Activated CD4-positive, alpha-beta T cell treated with anti-CD3 and anti-CD28 coated beads for 36 hours (primary cell): ENCODE measurements at regions of chr2 and their contacts with region 1.

Region 1: DNA sequence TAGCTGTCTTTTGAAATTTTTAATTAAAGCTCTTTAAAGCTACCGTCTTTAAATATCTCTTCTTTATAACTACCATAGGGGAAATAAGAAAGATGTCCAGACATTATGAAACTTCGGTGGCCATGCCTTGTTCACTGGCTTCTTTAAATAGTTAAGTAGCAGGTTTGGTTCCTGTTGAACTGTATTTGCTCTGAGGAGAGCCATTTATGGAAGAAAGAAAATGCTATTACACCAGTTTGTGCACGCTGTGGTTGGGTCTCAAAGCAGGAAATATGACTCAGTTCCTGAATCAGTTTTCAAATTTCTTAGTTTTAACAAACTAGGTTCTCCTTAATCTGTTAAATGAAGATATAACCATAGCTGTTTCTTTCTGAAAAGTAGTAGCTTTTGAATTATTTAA is 12.2 kb downstream of the ARPC2 start:
- DNase-seq: peak; percentile 70
- ATAC-seq: peak; percentile 83
- H3K4me3 Mint-ChIP-seq: peak overlapping the region; percentile 45
- H3K27ac Mint-ChIP-seq: peak overlapping the region; percentile 95
- H3K4me1 Mint-ChIP-seq: peaks cover 77% of the 10 kb centered on the region
- H3K27me3 Mint-ChIP-seq: no peaks in the 10 kb centered on the region

Region 2: DNA sequence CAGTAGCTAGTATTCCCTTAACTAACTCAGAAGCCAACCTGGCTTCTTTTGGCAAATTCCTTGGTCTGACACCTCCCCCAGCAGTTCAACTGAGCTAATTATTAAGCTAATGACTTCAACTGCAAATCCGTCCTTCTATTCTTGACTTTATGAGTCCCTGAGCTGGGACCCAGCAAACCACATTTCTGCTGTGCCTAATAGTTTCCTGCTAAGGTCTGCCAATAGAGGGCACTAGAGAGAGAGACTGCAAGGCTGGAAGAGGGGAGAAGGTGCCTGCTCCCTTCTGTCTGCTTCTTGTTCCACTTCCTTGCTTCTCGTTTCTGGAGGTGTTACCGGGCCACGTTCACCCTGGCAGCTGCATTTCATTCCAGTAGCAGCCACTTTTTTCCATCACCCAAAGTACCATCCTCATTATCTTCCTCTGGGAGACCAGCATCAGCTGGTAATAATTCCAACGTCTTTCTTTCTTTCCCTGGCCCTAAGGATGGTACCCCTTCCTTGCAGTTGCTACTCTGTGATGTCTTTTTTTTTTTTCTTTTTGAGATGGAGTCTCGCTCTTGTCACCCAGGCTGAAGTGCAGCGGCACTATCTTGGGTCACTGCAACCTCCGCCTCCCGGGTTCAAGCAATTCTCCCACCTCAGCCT is 578.4 kb before region 1 on chr2:
- CTCF ChIA-PET with region 1: no interaction called
- POLR2A ChIA-PET with region 1: no interaction called
- intact Hi-C with region 1: no loop called
- DNase-seq: peak; percentile 43
- ATAC-seq: peak; percentile 87
- H3K4me3 Mint-ChIP-seq: no peak overlapping the region
- H3K27ac Mint-ChIP-seq: no peak overlapping the region
- H3K4me1 Mint-ChIP-seq: peaks cover 3% of the 10 kb centered on the region
- H3K27me3 Mint-ChIP-seq: peaks cover 2% of the 10 kb centered on the region

Region 3: GRCh38 chr2:218186355-218186766 is 42.9 kb before region 1 on chr2:
- CTCF ChIA-PET with region 1: interaction called, 6 read pairs
- POLR2A ChIA-PET with region 1: no interaction called
- intact Hi-C with region 1: loop called (anchors 1 to 2 kb)
- DNase-seq: peak; percentile 83
- ATAC-seq: peak; percentile 95
- H3K4me3 Mint-ChIP-seq: no peak overlapping the region
- H3K27ac Mint-ChIP-seq: no peak overlapping the region
- H3K4me1 Mint-ChIP-seq: peaks cover 8% of the 10 kb centered on the region
- H3K27me3 Mint-ChIP-seq: no peaks in the 10 kb centered on the region

Region 4: DNA sequence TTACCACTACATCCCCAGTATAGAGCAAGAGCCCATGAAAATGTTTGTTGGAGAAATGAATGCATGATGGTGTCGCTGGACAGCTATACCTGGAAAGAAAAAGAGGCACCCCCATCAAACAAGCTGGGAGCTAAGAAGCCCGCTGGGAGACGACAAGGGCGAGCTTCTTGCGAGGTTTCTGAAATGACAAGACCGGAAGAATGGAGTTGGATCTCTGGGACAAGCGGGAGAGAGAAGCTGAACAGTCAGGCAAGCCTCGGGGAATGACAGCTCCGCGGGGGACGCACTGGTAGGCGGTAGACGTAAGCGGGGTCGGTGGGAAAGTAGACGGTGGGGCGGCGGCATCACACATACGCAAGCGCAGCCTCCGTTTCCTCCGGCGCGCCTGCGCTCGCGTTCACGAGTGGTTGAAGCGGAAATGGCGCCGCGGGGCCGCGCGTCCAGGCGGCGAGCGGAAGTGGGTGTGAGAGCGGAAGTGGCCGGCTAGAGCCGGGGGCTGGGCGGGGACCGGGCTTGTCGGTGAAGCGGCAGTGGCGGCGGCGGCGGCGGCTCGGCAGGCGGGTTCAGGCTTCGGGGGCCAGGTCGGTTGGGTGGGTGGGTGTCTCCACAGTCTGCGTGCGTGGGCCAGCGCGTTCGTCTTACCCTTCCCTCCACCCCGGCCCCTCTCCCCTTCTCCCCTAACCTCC is 12.4 kb before region 1 on chr2 and contains the start of gene ARPC2:
- CTCF ChIA-PET with region 1: interaction called, 47 read pairs
- POLR2A ChIA-PET with region 1: interaction called, 10 read pairs
- intact Hi-C with region 1: loop called (anchors 1 kb)
- DNase-seq: peak; percentile 96
- ATAC-seq: peak; percentile 64
- H3K4me3 Mint-ChIP-seq: peak within 1 kb of the TSS; percentile 81
- H3K27ac Mint-ChIP-seq: peak within 1 kb of the TSS; percentile 96
- H3K4me1 Mint-ChIP-seq: peaks cover 34% of the 10 kb centered on the region
- H3K27me3 Mint-ChIP-seq: no peaks in the 10 kb centered on the region
- total RNA-seq, gene ARPC2: 563 to 632 TPM

Region 5: GRCh38 chr2:218245214-218245613 is 16.0 kb after region 1 on chr2:
- CTCF ChIA-PET with region 1: interaction called, 29 read pairs
- POLR2A ChIA-PET with region 1: interaction called, 3 read pairs
- intact Hi-C with region 1: loop called in 1 of 2 experiments (anchors 2 kb)
- DNase-seq: no peak
- ATAC-seq: peak; percentile 23
- H3K4me3 Mint-ChIP-seq: no peak overlapping the region
- H3K27ac Mint-ChIP-seq: peak overlapping the region; percentile 72
- H3K4me1 Mint-ChIP-seq: peaks cover 4% of the 10 kb centered on the region
- H3K27me3 Mint-ChIP-seq: no peaks in the 10 kb centered on the region

Region 6: DNA sequence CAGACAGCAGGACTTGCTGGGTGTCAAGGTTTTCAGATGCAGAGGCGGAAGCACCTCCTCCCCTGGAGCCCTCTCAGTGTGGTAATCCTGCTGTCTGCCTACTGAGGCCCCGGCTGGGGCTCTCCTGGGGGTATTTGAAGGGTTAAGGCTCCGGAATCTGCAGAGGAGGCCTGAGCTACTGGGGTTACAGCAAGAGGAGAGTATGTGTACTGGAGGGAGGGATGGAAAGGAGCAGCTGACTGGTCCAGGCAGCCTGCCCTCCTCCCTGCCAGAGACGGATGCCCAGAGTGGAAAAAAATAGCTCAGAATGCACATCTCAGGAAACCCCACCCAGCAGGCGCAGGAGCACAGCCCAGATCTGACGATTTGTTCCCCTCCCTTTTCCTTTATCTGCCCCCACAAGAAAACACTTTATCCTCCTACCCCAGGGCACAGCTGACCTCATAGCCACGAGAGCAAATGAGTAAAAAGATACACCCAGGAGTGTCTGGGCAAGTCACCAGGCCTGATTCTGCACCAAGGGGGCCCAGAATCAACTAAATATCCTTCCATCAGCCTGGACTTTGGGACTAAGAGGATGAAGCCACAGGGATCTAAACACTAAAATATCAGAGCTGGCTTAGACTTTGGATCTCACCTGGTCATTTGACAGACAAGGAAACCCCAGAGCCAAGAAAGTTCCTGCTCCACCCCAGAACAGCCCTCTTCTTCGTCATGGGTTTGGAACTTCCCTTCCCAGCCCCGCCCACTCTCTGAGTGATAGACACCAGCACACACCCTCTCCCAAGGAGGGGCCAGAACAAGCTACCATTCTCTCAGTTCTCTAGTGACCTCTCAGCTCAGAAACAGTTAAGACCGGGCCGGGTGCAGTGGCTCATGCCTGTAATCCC is 57.6 kb after region 1 on chr2:
- CTCF ChIA-PET with region 1: interaction called, 4 read pairs
- POLR2A ChIA-PET with region 1: interaction called, 7 read pairs
- intact Hi-C with region 1: loop called in 1 of 2 experiments (anchors 1 kb)
- DNase-seq: peak; percentile 91
- ATAC-seq: peak; percentile 74
- H3K4me3 Mint-ChIP-seq: peak overlapping the region; percentile 80
- H3K27ac Mint-ChIP-seq: peak overlapping the region; percentile 99
- H3K4me1 Mint-ChIP-seq: peaks cover 88% of the 10 kb centered on the region
- H3K27me3 Mint-ChIP-seq: no peaks in the 10 kb centered on the region

Region 7: DNA sequence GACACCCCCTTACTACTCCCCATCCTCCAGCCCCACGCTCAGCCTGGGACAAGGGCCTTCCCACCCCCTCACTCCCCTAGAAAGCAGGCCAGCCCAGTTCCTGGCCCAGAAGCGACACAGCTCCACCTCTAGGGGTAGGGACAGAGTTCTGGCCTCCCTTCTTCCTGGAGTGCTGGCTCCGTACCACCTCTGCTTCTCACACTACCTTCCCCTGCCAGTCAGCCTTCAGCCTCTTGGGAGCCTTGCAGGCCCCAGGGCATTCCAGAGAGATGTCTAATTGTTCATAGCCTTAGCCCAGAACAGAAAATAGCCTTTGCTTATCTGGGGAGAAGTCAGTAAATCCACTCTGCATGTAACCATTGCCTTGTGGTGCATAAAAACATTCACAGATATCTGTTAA is 114.4 kb after region 1 on chr2:
- CTCF ChIA-PET with region 1: no interaction called
- POLR2A ChIA-PET with region 1: no interaction called
- intact Hi-C with region 1: no loop called
- DNase-seq: no peak
- ATAC-seq: no peak
- H3K4me3 Mint-ChIP-seq: no peak overlapping the region
- H3K27ac Mint-ChIP-seq: no peak overlapping the region
- H3K4me1 Mint-ChIP-seq: no peaks in the 10 kb centered on the region
- H3K27me3 Mint-ChIP-seq: no peaks in the 10 kb centered on the region